ENCODE measurements at regions of chr16 and their contacts with region 1.

Region 1: GRCh38 chr16:57367116-57367752 is 5.1 kb upstream of the CX3CL1 start:
- DNase-seq: peak; percentile 53

Region 2: DNA sequence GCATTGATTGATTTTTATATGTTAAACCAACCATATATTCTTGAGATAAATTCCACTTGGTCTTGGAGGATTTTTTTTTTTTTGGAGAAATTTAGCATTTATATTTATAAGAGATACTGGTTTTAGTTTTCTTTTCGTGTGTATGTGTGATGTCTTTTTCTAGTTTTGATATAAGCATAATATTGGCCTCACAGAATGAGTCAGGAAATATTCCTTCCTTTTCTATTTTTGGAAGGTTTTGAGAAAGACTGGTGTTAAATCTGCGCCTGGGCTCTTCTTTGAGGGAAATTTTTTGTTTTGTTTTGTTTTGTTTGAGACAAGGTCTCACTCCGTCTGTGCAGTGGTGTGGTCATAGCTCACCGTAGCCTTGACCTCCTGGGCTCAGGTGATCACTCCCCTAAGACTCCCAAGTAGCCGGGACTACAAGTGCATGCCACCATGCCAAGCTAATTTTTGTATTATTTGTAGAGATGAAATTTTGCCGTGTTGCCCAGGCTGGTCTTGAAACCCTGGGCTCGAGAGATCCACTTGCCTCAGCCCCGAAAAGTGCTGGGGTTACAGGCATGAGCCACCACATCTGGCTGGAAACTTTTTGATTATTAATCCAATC is 37.4 kb before region 1 on chr16:
- intact Hi-C with region 1: loop called in 1 of 2 experiments (anchors 5 kb)
- DNase-seq: no peak

Region 3: DNA sequence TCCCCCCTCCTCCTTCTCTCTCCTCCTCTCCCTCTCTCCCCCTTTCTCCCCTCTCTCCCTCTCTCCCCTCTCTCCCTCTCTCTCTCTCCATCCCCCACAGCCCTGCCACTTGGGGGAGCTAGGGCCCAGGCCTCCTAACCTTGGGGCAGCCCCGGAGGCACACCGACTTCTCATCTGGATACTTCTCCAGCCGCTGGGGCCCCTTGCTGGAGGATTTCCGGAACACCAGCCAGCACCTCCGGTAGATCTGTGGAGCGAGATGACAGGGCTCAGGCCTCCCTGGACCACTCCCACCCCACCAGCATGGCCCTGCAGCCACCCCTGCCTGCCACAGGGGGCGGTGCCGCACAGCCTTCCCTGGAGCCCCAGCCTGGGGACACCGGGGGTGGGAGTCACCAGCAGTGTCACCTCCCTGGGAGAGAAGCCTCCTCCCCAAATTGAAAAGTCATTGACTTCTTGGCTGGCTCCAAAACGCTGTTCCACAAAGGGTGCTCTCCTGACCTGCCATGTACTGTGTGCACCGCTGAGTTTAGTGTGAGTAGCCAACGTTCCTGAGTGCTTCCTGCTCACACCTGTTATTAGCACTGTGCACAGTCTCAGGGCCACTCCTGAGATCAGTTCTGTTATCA is 108.6 kb after region 1 on chr16:
- intact Hi-C with region 1: no loop called
- DNase-seq: no peak

Region 4: GRCh38 chr16:57757326-57757786 is 390.1 kb after region 1 on chr16:
- intact Hi-C with region 1: no loop called
- DNase-seq: peak; percentile 97